RWPE1 (cell line): ENCODE measurements at regions of chr12 and their contacts with region 1.

Region 1: GRCh38 chr12:49644620-49644994 is 21.2 kb downstream of the PRPF40B start:
- DNase-seq: peak; percentile 69
- H3K27ac ChIP-seq: peak overlapping the region; percentile 82
- CTCF ChIP-seq: peak; percentile 77

Region 2: GRCh38 chr12:49451468-49452259 is 192.9 kb before region 1 on chr12:
- CTCF ChIA-PET with region 1: no interaction called
- POLR2A ChIA-PET with region 1: no interaction called
- DNase-seq: no peak
- H3K27ac ChIP-seq: no peak overlapping the region
- CTCF ChIP-seq: no peak

Region 3: GRCh38 chr12:49615725-49616124 is 28.9 kb before region 1 on chr12:
- CTCF ChIA-PET with region 1: no interaction called
- POLR2A ChIA-PET with region 1: no interaction called
- DNase-seq: no peak
- H3K27ac ChIP-seq: no peak overlapping the region
- CTCF ChIP-seq: no peak

Region 4: DNA sequence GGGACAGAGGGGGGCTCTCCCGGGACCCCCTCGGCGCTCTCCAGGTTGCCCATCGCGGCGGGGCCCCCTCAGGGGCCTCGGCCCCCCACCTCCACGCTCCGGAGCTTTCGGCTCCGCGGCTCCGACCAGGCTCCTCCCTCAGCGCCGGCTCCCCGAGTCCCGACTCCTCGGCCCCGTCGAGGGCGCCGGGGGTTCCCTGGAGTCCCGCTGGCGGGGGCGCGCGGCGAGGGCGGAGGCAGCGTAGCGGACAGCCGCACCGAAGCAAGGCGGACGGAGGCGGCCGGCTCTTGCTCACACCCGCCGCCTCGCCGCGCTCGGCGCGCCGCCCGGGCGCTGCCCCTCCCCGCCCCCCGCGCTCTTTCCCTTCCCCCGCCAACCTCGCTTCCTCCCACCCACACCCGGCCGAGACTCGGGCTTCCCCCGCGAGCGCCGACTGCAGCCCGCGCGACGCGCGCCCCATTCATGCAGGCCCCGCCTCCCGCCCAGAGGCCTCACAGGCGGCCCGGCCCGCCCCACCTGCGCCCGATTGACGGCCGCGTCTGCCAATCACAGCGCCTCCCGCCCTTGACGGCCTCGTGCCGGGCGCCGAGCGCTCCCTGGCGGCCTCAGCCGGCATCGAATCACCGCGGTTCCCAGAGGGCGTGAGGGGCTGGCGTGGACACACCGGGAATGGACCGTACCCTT is 62.7 kb after region 1 on chr12 and contains the start of gene FMNL3:
- CTCF ChIA-PET with region 1: interaction called, 18 read pairs
- POLR2A ChIA-PET with region 1: no interaction called
- DNase-seq: peak; percentile 99
- H3K27ac ChIP-seq: peak within 1 kb of the TSS; percentile 80
- CTCF ChIP-seq: peak; percentile 96